Vagina (tissue), 2 donors: ENCODE measurements at regions of chr2 and their contacts with region 1.

Region 1: DNA sequence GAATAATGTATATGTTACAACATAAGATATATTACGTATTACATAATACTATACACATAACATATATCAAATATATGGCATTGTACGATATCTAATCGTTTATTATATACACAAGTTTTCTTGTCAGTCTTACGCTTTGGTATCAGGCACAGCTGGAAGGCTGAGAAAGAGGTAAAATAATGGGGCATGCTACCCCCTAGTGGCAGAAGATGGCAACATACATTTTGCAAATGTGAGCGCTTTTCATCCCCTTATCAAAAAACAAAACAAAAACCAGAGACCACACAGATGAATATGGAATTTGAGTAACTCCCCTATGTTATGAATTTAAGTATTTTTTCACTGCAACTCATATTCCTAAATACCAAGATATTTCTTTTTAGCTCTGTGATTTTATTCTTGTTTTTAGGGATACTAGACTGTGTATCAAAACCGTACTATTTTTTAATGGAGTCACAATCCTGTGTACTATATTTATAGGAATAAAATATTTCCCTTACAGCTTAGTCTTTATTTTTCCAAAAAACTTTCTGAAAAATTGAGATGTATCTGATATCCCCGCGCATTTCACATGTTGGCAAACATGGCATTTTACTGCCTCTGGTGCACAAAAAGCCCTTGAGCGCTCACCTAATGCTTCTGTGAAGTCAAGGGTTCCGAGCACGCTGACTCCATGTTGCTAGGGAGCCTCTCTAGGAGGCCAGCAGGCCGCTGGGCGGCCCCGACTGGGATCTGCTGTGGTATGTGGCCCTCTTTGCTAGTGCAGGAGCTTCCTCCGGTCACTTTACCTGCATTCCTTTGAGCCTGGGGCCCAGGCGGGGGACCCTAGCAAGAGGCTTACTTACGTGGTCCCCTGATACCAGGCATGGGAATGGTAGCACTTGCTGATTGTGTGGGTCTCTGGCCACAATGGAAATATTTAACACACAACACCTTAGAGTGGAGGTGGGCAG is 62.5 kb downstream of the SLC4A3 start:
- DNase-seq: no peak
- H3K4me3 ChIP-seq: no peak overlapping the region
- H3K27ac ChIP-seq: peak overlapping the region; percentile 49
- H3K4me1 ChIP-seq: no peaks in the 10 kb centered on the region
- H3K27me3 ChIP-seq: no peaks in the 10 kb centered on the region
- CTCF ChIP-seq: peak; percentile 41 to 76 (median 55)
- POLR2A ChIP-seq: no peak

Region 2: DNA sequence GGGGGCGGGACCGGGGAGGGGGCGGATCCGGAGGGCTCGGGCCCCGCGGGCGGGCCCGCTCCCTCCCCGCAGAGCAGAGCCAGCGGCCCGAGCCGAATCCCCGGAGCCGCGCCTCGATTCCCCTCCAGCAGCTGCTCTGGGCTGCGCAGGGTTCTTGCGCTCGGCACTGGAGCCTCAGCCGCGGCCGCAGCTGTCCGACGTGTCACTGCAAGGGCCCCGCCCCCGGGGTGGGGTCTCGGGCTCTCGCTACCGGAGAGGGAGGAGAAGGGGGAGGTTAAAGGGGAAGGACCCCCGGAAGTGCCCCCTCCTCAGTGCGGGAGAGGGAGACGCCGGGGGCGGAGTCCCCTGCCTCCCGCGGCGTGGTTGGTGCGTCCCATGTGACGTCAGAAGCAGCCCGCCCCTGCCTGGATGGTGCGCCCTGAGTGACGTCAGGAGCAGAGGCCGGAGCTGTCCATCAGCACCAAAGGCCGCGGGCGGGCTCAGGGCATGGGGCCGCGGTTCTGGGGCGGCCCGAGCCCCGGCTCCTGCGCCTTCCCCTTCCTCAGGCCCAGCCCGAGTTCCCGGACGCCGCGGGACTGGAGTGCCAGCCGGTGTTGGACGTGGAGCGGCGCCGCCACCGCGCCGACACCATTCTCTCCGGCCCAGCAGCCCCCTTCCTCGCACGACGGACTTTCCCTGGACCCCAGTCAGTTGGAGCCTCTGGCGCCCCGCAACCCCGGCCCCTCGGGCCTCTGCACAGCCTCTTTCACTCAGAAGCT is 146.2 kb before region 1 on chr2 and contains the starts of genes CHPF and TMEM198:
- intact Hi-C with region 1: loop called (anchors 2 kb)
- DNase-seq: peak; percentile 98 to 99
- H3K4me3 ChIP-seq: peak within 1 kb of the TSS; percentile 62 to 64
- H3K27ac ChIP-seq: peak within 1 kb of the TSS; percentile 87
- H3K4me1 ChIP-seq: peaks cover 33% of the 10 kb centered on the region
- H3K27me3 ChIP-seq: no peaks in the 10 kb centered on the region
- CTCF ChIP-seq: no peak
- POLR2A ChIP-seq: peak in 1 of 2 donors; percentile 69
- total RNA-seq, gene CHPF: 41.5 TPM
- total RNA-seq, gene TMEM198: 1.5 TPM

Region 3: DNA sequence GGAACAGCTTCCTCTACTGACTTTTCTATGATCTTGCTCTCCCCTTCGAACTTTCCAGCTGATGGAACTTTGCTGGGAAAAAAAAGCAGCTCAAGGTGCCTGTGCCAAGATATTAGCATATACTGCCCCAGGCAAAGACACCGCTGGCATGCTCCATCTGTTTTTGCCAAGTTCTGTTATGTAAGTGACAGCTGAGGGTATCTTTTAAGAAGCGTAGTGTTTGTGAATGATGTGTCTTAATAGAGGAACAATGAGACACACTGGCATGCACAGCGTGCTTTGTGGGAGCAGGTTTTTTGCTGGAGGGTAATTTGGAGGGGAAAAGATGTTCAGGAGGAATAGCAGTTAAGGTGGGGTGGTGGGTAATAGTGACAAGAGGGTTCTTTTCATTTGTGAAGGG is 14.7 kb before region 1 on chr2:
- intact Hi-C with region 1: no loop called
- DNase-seq: peak; percentile 40 to 84
- H3K4me3 ChIP-seq: no peak overlapping the region
- H3K27ac ChIP-seq: no peak overlapping the region
- H3K4me1 ChIP-seq: no peaks in the 10 kb centered on the region
- H3K27me3 ChIP-seq: no peaks in the 10 kb centered on the region
- CTCF ChIP-seq: no peak
- POLR2A ChIP-seq: no peak

Region 4: GRCh38 chr2:219823574-219823973 is 133.6 kb after region 1 on chr2:
- intact Hi-C with region 1: no loop called
- DNase-seq: no peak
- H3K4me3 ChIP-seq: no peak overlapping the region
- H3K27ac ChIP-seq: no peak overlapping the region
- H3K4me1 ChIP-seq: no peaks in the 10 kb centered on the region
- H3K27me3 ChIP-seq: no peaks in the 10 kb centered on the region
- CTCF ChIP-seq: no peak
- POLR2A ChIP-seq: no peak